Ascending aorta (tissue), 2 donors: ENCODE measurements at regions of chr10 and their contacts with region 1.

Region 1: GRCh38 chr10:89954787-89955566 is 253.6 kb downstream of the KIF20B start:
- DNase-seq: no peak
- H3K4me3 ChIP-seq: no peak overlapping the region
- H3K27ac ChIP-seq: no peak overlapping the region
- H3K4me1 ChIP-seq: no peaks in the 10 kb centered on the region
- H3K27me3 ChIP-seq: no peaks in the 10 kb centered on the region
- CTCF ChIP-seq: peak in 2 of 3 experiments; percentile 18 to 51

Region 2: DNA sequence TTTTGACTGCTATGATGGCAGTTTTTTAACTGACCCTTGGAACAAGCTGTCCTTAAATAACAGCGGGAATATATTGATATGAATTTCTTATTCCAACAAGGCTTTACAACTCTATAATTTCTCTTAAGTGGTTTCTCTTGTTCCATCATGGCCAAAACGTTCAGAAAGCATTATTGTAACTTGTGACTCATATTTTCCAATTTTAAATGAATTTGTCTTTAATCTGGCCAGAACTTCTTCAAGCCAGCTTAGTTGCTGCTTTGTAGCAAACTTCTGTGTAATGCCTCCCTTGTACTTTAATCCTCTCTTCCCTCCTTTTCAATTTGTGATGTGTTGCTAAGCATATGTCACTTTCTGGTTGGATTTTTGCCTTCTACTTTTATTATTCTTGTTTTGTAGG is 18.3 kb after region 1 on chr10:
- intact Hi-C with region 1: no loop called
- DNase-seq: no peak
- H3K4me3 ChIP-seq: no peak overlapping the region
- H3K27ac ChIP-seq: no peak overlapping the region
- H3K4me1 ChIP-seq: no peaks in the 10 kb centered on the region
- H3K27me3 ChIP-seq: no peaks in the 10 kb centered on the region
- CTCF ChIP-seq: no peak

Region 3: GRCh38 chr10:89985446-89985845 is 30.5 kb after region 1 on chr10:
- intact Hi-C with region 1: no loop called
- DNase-seq: no peak
- H3K4me3 ChIP-seq: no peak overlapping the region
- H3K27ac ChIP-seq: no peak overlapping the region
- H3K4me1 ChIP-seq: no peaks in the 10 kb centered on the region
- H3K27me3 ChIP-seq: no peaks in the 10 kb centered on the region
- CTCF ChIP-seq: no peak

Region 4: DNA sequence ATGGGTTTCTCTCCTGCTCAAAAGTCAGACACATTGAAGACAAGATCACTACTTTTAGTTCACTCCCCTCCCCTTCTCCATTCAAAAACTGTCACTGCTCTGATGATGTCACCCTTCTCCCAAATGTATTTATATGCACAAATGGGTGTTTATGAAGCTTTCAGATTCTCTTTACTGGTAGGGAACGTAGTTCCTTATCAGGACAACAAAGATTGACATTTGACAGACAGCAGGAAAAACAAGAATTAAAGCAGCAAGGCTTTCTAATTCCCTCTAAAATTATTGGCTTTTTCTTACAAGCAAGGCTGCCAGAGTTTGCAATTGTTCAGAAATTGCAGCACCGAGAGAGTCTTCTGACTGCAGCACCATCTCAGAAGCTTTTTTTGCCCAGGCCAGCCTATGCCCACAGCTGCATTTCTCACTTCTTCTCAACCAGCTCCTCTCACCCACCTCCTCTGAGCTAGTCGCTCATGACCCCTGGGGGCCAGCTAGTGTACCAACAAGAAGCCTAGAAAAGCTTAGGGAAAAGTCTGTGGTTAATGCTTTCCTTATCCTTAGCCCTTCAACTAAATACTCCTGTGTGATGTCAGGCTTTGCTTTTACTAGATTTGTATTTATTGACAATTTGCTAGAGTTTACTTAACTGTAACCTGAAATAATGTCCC is 637.8 kb after region 1 on chr10:
- intact Hi-C with region 1: loop called (anchors 2 kb)
- DNase-seq: peak in 1 of 2 donors; percentile 74
- H3K4me3 ChIP-seq: no peak overlapping the region
- H3K27ac ChIP-seq: peak overlapping the region in 1 of 2 donors; percentile 50
- H3K4me1 ChIP-seq: peaks cover 3 to 9% of the 10 kb centered on the region in 2 donors
- H3K27me3 ChIP-seq: no peaks in the 10 kb centered on the region
- CTCF ChIP-seq: peak; percentile 53 to 69 (median 55)

Region 5: DNA sequence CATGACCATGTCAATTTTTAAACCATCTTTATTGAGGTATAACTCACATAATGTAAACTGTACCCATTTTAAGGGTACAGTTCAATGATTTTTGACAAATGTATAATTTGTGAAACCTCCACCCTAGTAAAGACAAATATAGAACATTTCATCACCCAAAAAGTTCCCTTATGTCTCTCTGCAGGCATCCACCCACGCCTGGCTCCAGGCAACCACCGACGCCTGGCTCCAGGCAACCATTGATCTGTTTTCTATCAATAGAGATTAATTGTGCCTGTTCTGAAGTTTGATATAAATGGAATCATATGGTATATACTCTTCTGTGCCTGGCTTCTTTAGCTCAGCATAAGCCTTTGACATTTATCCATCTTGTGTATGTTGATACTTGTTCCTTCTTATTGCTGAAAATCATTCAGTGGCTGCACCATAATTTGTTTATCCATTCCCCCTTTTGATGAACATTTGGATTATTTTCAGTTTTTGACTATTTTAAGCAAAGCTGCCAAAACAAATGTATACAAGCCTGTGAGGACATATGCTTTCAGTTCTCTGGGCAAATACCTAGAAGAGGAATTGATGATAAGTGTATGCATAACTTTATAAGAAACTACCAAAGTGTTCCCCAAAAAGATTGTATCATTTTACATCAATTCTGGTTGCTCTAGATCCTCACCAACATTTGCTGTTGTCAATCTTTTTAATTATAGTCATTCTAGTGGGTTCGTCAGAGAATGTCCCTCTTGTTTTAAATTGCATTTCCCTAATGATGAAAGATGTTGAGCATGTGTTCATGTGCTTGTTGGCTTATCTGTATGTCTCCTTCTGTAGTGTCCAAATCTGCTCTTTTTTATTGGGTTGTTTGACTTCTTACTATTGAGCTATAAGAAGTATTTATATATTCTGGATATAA is 1399.4 kb after region 1 on chr10:
- intact Hi-C with region 1: no loop called
- DNase-seq: no peak
- H3K4me3 ChIP-seq: no peak overlapping the region
- H3K27ac ChIP-seq: no peak overlapping the region
- H3K4me1 ChIP-seq: peaks cover 10 to 21% of the 10 kb centered on the region in 2 donors
- H3K27me3 ChIP-seq: no peaks in the 10 kb centered on the region
- CTCF ChIP-seq: no peak